Ascending aorta (tissue), 2 donors: ENCODE measurements at regions of chr10 and their contacts with region 1.

Region 1: DNA sequence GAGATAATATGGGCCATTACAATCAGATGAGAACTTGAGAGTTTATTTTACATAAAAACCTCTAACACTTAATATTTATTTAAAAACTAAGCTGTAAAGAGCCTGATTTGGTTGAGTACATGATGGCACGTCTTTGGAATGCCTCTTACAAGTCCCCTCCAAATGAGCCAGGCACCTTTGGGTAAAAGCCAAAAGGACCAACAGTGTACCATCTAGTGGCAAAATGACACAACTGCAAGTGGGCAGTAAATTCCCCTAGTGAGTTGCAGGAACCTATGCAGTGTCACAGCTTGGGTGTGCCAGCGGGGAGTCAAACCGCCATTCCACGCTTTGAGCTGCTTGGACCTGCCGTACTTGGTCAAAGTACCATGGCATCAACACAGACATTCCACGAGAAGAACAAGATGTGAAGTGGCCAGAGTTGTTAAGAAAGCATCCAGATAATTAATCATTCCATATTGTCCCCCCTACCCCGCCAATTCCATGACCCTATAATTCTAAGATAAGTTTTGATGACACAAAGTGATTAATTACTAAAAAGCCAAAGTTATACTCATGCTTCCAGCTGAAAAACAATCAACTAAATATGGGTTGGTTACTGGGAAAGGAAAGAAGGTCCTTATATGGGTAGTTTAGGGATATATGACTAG is 115.2 kb downstream of the SORBS1 start:
- DNase-seq: peak; percentile 63 to 96
- H3K4me3 ChIP-seq: peak overlapping the region in 1 of 2 donors; percentile 35
- H3K27ac ChIP-seq: peak overlapping the region; percentile 93 to 96
- H3K4me1 ChIP-seq: peaks cover 42 to 91% of the 10 kb centered on the region in 2 donors
- H3K27me3 ChIP-seq: no peaks in the 10 kb centered on the region
- CTCF ChIP-seq: peak; percentile 84 to 93 (median 91)

Region 2: DNA sequence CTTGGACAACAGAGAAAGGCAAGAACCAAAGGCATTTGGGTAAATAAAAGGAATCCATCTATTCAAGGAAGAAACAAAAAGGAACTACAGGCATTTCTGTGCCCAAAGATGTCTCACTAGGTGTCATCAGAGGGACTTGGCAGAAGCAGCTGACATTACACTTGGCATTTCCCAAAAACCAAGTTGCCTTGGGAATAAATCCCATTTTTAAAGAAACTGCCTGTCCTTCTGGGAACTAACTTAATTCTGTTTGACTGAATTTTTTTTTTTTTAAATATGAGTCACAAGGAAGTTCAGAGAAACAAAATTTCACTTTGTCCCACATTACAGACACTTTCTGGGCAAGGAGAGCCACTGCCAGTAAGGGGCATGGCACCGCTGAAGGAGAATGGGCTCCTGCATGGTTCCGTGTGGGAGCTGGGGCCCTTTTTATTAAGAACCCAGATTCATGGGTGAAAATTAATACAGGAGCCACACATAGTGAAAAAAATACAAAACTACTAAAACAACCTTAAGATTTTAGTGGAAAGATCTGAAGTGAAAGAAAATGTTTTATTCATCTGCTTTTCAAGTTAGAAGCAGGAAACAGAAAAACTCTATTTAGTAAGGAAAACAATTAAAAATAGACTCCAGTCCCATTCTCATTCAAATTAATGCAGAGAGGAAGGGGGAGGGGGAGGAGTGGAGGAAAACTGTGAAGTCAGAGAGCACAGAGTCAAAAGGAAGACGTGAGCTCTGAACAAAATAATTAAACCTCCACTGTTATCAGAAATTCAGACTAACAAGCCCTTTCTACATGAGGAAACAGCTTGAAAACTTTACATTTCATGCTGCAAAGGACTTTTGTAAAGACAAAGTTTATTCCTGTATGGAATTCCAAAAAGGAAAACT is 36.7 kb before region 1 on chr10:
- intact Hi-C with region 1: loop called (anchors 2 kb)
- DNase-seq: peak in 1 of 2 donors; percentile 87
- H3K4me3 ChIP-seq: peak overlapping the region in 1 of 2 donors; percentile 9
- H3K27ac ChIP-seq: peak overlapping the region; percentile 89 to 95
- H3K4me1 ChIP-seq: peaks cover 35 to 84% of the 10 kb centered on the region in 2 donors
- H3K27me3 ChIP-seq: no peaks in the 10 kb centered on the region
- CTCF ChIP-seq: no peak

Region 3: DNA sequence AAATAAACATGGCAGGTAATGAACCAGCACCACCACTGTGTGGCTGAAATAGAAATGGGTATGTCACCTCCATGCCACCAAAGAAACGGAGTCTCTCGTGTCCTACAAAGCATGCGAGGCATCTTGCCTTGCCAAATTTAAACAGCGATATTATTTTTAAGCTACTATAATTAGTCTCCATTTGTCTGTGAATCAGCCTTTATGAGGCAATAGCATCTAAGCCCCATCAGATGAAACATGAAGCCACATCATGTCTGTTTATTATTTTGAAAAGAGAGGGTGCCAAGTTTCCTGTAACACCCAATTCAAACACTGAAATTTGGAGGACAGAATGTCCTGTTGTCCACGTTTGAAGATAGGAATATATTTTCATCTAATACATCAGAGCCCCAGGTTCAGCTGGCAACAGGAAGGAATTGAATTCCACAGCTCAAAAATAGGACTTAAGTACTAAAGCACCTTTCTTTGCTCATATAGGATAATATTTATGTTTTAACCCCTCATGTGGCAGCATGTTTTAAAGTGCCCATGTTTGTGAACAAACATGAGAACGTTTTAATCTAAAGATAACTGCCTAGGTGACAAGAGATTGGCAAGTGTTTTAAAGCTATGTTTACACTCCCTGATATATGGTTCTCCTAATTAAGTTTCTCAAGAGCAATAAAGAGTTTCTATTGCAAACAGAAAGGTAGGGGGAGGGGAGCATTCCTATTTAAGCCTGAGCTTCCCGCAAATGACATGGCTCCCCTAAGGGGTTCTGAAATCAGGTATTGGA is 28.5 kb after region 1 on chr10:
- intact Hi-C with region 1: loop called (anchors 2 kb)
- DNase-seq: peak in 1 of 2 donors; percentile 77
- H3K4me3 ChIP-seq: no peak overlapping the region
- H3K27ac ChIP-seq: peak overlapping the region; percentile 95 to 96
- H3K4me1 ChIP-seq: peaks cover 23 to 88% of the 10 kb centered on the region in 2 donors
- H3K27me3 ChIP-seq: no peaks in the 10 kb centered on the region
- CTCF ChIP-seq: peak in 1 of 3 experiments; percentile 15

Region 4: GRCh38 chr10:95513941-95514392 is 68.0 kb after region 1 on chr10:
- intact Hi-C with region 1: loop called (anchors 5 kb)
- DNase-seq: peak; percentile 30 to 89
- H3K4me3 ChIP-seq: no peak overlapping the region
- H3K27ac ChIP-seq: peak overlapping the region; percentile 88 to 92
- H3K4me1 ChIP-seq: peaks cover 18 to 77% of the 10 kb centered on the region in 2 donors
- H3K27me3 ChIP-seq: no peaks in the 10 kb centered on the region
- CTCF ChIP-seq: no peak